B cell (primary cell): ENCODE measurements at regions of chr1 and their contacts with region 1.

Region 1: GRCh38 chr1:172532700-172533509 is at the start of gene SUCO:
- DNase-seq: peak; percentile 100
- ATAC-seq: peak; percentile 80
- H3K4me3 ChIP-seq: peak within 1 kb of the TSS; percentile 64 to 98 (median 96)
- H3K4me3 Mint-ChIP-seq: peak within 1 kb of the TSS; percentile 100
- H3K27ac ChIP-seq: peak within 1 kb of the TSS; percentile 99
- H3K27ac Mint-ChIP-seq: peak within 1 kb of the TSS; percentile 100
- H3K4me1 ChIP-seq: peaks cover 22 to 37% of the 10 kb centered on the region in 2 donors
- H3K4me1 Mint-ChIP-seq: peaks cover 45% of the 10 kb centered on the region
- H3K27me3 ChIP-seq: no peaks in the 10 kb centered on the region
- H3K27me3 Mint-ChIP-seq: peaks cover 9% of the 10 kb centered on the region
- CTCF ChIP-seq: peak; percentile 13
- total RNA-seq, gene SUCO: 59.7 and 59.9 TPM in 2 replicates

Region 2: DNA sequence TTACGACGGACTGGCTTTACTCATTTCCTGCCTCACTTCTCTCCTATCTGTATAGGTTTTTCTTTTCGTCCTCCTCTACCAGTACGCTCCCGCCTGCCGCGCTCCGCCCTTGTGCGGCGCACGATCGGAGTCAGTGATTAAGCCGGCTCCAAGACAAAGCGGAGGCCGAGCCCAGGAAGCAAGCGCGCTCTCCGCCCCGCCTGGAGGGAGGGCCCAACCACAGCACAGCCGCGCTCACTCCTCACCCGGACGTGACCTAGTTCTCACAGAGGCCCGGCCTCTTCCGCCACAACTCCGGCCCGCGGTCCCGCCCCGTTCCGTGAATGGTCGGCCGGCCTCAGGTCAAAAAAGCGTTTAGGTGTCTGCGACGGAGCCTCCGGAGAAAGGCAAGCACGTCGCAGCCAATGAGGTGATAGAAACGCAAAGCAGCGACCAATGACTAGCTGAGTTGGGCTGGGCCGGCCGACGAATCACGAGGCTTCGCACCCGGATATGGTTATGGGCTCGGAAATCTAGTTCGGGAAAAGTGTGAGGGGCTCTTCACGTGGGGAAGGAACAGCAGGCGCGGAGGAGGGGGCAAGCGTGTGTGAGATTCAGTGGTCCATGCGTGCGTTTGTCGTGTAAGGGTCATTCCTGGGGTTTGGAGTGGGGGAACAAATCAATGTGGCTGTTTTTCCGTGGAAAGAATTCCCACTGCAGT is 751.6 kb before region 1 on chr1 and contains the start of gene METTL13:
- CTCF ChIA-PET with region 1: no interaction called
- POLR2A ChIA-PET with region 1: no interaction called
- intact Hi-C with region 1: loop called (anchors 1 kb)
- DNase-seq: peak; percentile 99
- ATAC-seq: peak; percentile 91
- H3K4me3 ChIP-seq: peak within 1 kb of the TSS; percentile 82 to 100 (median 89)
- H3K4me3 Mint-ChIP-seq: peak within 1 kb of the TSS; percentile 96
- H3K27ac ChIP-seq: peak within 1 kb of the TSS; percentile 71 to 81
- H3K27ac Mint-ChIP-seq: peak within 1 kb of the TSS; percentile 94
- H3K4me1 ChIP-seq: peaks cover 26 to 32% of the 10 kb centered on the region in 2 donors
- H3K4me1 Mint-ChIP-seq: peaks cover 44% of the 10 kb centered on the region
- H3K27me3 ChIP-seq: no peaks in the 10 kb centered on the region
- H3K27me3 Mint-ChIP-seq: peaks cover 8% of the 10 kb centered on the region
- CTCF ChIP-seq: no peak
- total RNA-seq, gene METTL13: 33.0 and 35.4 TPM in 2 replicates

Region 3: DNA sequence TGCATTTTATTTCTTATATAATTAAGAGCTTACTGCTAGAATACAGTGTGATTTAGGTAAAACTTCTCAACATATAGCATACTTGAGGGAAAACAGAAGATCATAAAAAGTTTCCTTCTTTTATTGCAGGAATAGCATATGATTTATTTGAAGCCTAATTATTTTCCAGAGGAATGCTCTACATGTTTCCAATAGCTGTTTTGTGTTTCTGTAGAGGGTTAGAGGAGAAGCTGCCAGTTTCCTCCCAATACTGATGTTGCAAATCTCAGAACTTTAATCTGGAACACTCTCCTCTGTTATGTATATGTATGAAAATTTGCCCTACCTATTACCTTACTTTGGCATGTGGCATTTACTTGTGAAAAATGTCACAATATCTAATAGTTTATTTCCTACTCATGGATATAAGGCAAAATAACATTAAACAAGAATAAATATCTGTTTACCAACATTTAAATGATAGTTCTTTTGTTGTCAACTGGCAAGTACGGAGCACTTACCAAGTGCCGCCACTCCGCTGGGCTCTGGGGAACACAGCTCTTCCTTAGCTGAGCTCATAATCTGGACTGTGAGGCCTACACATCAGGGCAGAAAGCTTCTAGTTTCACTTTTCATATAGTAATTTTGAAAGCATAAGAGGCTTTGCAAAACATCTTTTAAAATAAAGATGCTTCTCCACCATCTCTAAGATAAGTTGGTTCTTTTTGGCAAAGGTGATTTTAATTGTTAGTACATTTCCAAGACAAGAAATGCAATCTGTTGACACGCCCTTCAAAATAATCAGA is 352.2 kb before region 1 on chr1:
- CTCF ChIA-PET with region 1: no interaction called
- POLR2A ChIA-PET with region 1: no interaction called
- intact Hi-C with region 1: loop called (anchors 1 kb)
- DNase-seq: peak; percentile 72
- ATAC-seq: peak; percentile 74
- H3K4me3 ChIP-seq: peak overlapping the region in 3 of 5 experiments; percentile 32 to 50 (median 38)
- H3K4me3 Mint-ChIP-seq: peak overlapping the region; percentile 86
- H3K27ac ChIP-seq: peak overlapping the region; percentile 77 to 93
- H3K27ac Mint-ChIP-seq: peak overlapping the region; percentile 97
- H3K4me1 ChIP-seq: peaks cover 52 to 56% of the 10 kb centered on the region in 2 donors
- H3K4me1 Mint-ChIP-seq: peaks cover 46% of the 10 kb centered on the region
- H3K27me3 ChIP-seq: no peaks in the 10 kb centered on the region
- H3K27me3 Mint-ChIP-seq: no peaks in the 10 kb centered on the region
- CTCF ChIP-seq: no peak

Region 4: GRCh38 chr1:172545396-172546004 is 12.6 kb after region 1 on chr1:
- CTCF ChIA-PET with region 1: interaction called, 3 read pairs
- POLR2A ChIA-PET with region 1: no interaction called
- intact Hi-C with region 1: loop called (anchors 1 kb)
- DNase-seq: peak; percentile 46
- ATAC-seq: peak; percentile 56
- H3K4me3 ChIP-seq: no peak overlapping the region
- H3K4me3 Mint-ChIP-seq: no peak overlapping the region
- H3K27ac ChIP-seq: peak overlapping the region in 1 of 2 donors; percentile 16
- H3K27ac Mint-ChIP-seq: no peak overlapping the region
- H3K4me1 ChIP-seq: peaks cover 20 to 27% of the 10 kb centered on the region in 2 donors
- H3K4me1 Mint-ChIP-seq: peaks cover 33% of the 10 kb centered on the region
- H3K27me3 ChIP-seq: no peaks in the 10 kb centered on the region
- H3K27me3 Mint-ChIP-seq: no peaks in the 10 kb centered on the region
- CTCF ChIP-seq: no peak

Region 5: DNA sequence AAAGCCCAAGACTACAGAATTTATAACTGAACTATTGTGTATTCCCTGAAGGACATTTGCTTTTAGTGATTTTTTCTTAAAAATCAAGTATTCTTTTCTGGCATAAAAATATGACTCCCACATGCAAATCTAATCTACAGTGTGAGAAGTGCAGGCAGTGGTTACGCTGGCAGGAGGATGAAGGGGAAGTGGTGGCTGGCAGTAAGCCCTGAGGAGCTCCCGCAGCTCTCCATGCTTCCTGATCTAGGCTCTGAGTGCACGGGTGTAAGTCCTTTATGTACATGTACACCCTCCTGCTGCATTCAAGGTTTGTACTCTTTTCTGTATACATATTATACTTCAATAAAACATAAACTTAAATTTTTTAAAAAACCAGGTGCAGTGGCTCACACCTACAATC is 876.7 kb after region 1 on chr1:
- CTCF ChIA-PET with region 1: no interaction called
- POLR2A ChIA-PET with region 1: no interaction called
- intact Hi-C with region 1: loop called (anchors 5 kb)
- DNase-seq: peak; percentile 73
- ATAC-seq: peak; percentile 22
- H3K4me3 ChIP-seq: no peak overlapping the region
- H3K4me3 Mint-ChIP-seq: peak overlapping the region; percentile 64
- H3K27ac ChIP-seq: peak overlapping the region; percentile 89 to 97
- H3K27ac Mint-ChIP-seq: peak overlapping the region; percentile 87
- H3K4me1 ChIP-seq: peaks cover 76 to 88% of the 10 kb centered on the region in 2 donors
- H3K4me1 Mint-ChIP-seq: peaks cover 79% of the 10 kb centered on the region
- H3K27me3 ChIP-seq: no peaks in the 10 kb centered on the region
- H3K27me3 Mint-ChIP-seq: no peaks in the 10 kb centered on the region
- CTCF ChIP-seq: no peak

Region 6: GRCh38 chr1:173714759-173715537 is 1182.0 kb after region 1 on chr1 and contains the start of gene KLHL20:
- CTCF ChIA-PET with region 1: no interaction called
- POLR2A ChIA-PET with region 1: no interaction called
- intact Hi-C with region 1: loop called (anchors 2 kb)
- DNase-seq: peak; percentile 90
- ATAC-seq: peak; percentile 93
- H3K4me3 ChIP-seq: peak within 1 kb of the TSS; percentile 76 to 92 (median 84)
- H3K4me3 Mint-ChIP-seq: peak within 1 kb of the TSS; percentile 98
- H3K27ac ChIP-seq: peak within 1 kb of the TSS; percentile 75 to 84
- H3K27ac Mint-ChIP-seq: peak within 1 kb of the TSS; percentile 96
- H3K4me1 ChIP-seq: peaks cover 10 to 15% of the 10 kb centered on the region in 2 donors
- H3K4me1 Mint-ChIP-seq: peaks cover 23% of the 10 kb centered on the region
- H3K27me3 ChIP-seq: peaks cover 0 to 9% (median 2%) of the 10 kb centered on the region in 4 experiments
- H3K27me3 Mint-ChIP-seq: peaks cover 26% of the 10 kb centered on the region
- CTCF ChIP-seq: no peak
- total RNA-seq, gene KLHL20: 32.2 and 35.4 TPM in 2 replicates

Region 7: DNA sequence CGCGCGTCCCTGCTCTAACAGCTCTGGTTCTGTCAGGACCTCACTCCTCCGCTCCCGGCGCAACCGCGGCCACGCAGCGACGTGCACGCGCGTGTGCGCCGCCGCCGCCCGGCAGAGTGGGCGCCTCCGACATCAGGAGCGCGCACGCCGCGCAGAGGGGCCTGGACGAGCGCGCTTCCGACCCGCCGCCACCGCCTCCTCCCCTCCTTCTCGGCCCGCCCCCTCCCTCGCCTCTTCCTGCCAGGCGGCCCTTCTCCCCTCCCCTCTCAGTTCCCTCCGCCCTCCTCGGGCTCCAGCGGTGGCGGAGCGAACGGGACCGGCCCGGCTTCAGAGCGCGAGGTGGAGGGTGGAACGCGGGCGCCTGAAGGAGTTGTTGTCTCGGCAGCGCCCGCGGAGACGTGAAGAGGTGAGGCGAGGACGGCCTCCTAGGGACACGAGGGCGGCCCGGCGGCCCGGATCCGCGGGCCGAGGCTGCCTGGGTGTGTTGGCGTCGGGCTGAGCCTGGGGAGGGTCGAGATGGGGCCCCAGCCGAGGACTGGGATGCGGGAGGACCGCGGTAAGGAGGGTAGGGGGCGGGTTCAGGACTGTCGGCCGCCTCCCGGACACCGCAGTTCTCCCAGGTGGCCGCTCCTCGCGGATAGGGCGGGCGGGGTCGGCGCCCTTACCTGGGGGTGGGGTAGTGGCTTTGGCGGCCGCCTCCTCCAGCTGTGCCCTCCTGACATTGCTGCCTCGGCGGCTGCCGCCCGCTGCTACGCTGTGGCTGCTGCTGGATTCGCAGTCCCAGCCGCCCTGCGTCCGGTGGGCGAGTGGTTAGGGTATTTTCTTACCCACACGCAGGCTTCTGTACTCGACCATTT is 1626.6 kb after region 1 on chr1 and contains the start of gene RABGAP1L:
- CTCF ChIA-PET with region 1: no interaction called
- POLR2A ChIA-PET with region 1: no interaction called
- intact Hi-C with region 1: loop called (anchors 2 kb)
- DNase-seq: peak; percentile 96
- ATAC-seq: peak; percentile 86
- H3K4me3 ChIP-seq: peak within 1 kb of the TSS; percentile 76 to 98 (median 93)
- H3K4me3 Mint-ChIP-seq: peak within 1 kb of the TSS; percentile 95
- H3K27ac ChIP-seq: peak within 1 kb of the TSS; percentile 85 to 89
- H3K27ac Mint-ChIP-seq: peak within 1 kb of the TSS; percentile 97
- H3K4me1 ChIP-seq: peaks cover 29 to 48% of the 10 kb centered on the region in 2 donors
- H3K4me1 Mint-ChIP-seq: peaks cover 60% of the 10 kb centered on the region
- H3K27me3 ChIP-seq: no peaks in the 10 kb centered on the region
- H3K27me3 Mint-ChIP-seq: no peaks in the 10 kb centered on the region
- CTCF ChIP-seq: no peak
- total RNA-seq, gene RABGAP1L: 159 and 163 TPM in 2 replicates